ENCODE measurements at regions of chr3 and their contacts with region 1.

Region 1: GRCh38 chr3:143972505-143973255 is 1.1 kb downstream of the DIPK2A start:
- DNase-seq: peak in 8 of 9 donors; percentile 29 to 78 (median 61)
- ATAC-seq: peak; percentile 14
- H3K4me3 ChIP-seq: peak overlapping the region; percentile 61
- H3K4me3 Mint-ChIP-seq: peak overlapping the region; percentile 91 to 100 (median 97)
- H3K27ac ChIP-seq: peak overlapping the region; percentile 84
- H3K27ac Mint-ChIP-seq: peak overlapping the region; percentile 87 to 99 (median 97)
- H3K4me1 ChIP-seq: peaks cover 10 to 14% of the 10 kb centered on the region in 2 donors
- H3K4me1 Mint-ChIP-seq: peaks cover 25 to 46% (median 33%) of the 10 kb centered on the region in 7 donors
- H3K27me3 ChIP-seq: no peaks in the 10 kb centered on the region
- H3K27me3 Mint-ChIP-seq: peaks cover 0 to 22% (median 0%) of the 10 kb centered on the region in 5 donors

Region 2: DNA sequence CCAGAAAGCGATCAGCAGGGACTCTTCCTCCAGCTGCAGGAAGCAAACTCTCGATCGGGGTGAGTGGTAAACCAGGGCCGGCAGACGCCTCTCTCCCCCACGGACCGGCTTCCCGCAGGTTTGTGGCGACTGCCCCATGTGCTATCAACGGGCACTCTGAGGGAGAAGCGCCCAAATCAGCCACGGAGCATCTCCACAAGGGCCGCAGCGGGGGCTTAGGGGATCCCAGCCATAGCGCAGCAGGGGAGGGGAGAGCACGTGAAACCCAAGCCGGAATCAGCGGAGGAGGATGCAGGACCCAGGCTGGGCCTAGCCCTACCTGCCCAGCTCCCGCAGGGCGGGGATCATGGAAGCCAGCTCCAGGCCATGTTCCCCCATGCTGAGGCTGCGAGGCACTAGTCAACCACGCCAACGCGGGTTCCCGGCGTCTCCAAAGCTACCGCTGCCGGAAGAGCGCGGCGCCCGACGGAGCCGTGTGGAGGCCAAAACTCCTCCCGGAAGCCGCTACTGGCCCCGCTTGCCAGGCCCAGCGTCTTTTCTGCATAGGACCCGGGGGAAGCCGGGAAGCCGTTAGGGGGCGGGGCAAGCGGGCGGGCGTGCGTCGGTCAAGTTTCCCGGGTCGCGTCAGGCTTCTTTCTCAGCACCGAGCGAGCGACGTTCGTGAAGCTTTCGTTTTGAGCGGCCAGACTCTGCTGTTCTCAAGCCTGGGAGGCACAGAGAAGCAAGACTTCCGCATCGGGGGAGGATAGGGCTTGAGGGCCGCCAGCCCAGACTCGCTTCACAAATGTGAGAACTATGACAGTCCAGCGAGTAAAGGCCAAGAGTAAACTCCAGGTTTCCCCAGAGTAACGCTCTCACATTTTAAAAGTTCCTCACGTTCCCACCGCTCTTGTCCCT is 1394.1 kb before region 1 on chr3 and contains the start of gene ATR:
- CTCF ChIA-PET with region 1: no interaction called
- POLR2A ChIA-PET with region 1: interaction called, 5 read pairs
- intact Hi-C with region 1: loop called (anchors 1 to 5 kb)
- DNase-seq: peak; percentile 89 to 96 (median 95)
- ATAC-seq: peak; percentile 96
- H3K4me3 ChIP-seq: peak within 1 kb of the TSS; percentile 97
- H3K4me3 Mint-ChIP-seq: peak within 1 kb of the TSS; percentile 93 to 99 (median 97)
- H3K27ac ChIP-seq: peak within 1 kb of the TSS; percentile 94
- H3K27ac Mint-ChIP-seq: peak within 1 kb of the TSS; percentile 96 to 99 (median 98)
- H3K4me1 ChIP-seq: peaks cover 25 to 26% of the 10 kb centered on the region in 2 donors
- H3K4me1 Mint-ChIP-seq: peaks cover 45 to 60% (median 54%) of the 10 kb centered on the region in 7 donors
- H3K27me3 ChIP-seq: no peaks in the 10 kb centered on the region
- H3K27me3 Mint-ChIP-seq: peaks cover 0 to 20% (median 0%) of the 10 kb centered on the region in 5 donors
- total RNA-seq, gene ATR: 31.3 to 48.3 (median 36.2) TPM

Region 3: DNA sequence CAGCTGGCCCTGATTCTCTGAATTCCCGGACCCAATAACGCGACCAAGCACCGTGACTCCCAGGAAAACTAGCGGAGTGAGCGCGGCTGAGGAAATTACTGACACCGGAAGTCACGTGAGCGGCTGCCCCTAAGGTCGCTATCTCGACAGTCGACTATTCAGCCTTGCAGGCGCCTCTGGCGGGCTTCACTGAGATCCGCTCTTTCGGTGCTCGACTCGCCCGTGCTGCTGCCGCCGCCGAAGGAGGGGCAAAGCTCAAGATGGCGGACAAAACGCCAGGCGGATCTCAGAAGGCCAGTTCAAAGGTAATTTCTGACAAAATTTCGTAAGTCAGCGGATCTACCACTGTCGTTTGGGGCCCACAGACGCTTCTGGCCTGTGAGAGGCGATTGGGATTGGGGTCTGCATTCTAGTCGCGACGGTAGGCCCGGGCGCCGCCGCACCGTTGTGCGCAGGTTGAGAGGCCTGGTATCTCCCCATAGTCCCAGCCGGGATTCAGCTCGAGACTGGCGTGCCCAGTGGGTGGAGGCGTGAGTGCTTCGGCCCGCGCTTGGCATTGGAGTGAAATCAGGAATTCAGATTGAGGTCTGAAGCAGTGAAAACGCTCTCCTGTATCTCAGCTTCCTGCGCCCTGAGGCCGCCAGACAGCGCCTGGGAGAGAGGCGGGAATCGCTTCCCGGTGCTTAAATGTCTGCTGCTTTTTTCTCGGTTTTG is 971.2 kb before region 1 on chr3 and contains the start of gene U2SURP:
- CTCF ChIA-PET with region 1: no interaction called
- POLR2A ChIA-PET with region 1: interaction called, 16 read pairs
- intact Hi-C with region 1: loop called (anchors 1 to 2 kb)
- DNase-seq: peak; percentile 77 to 95 (median 88)
- ATAC-seq: peak; percentile 99
- H3K4me3 ChIP-seq: peak within 1 kb of the TSS; percentile 96
- H3K4me3 Mint-ChIP-seq: peak within 1 kb of the TSS; percentile 91 to 100 (median 98)
- H3K27ac ChIP-seq: peak within 1 kb of the TSS; percentile 95
- H3K27ac Mint-ChIP-seq: peak within 1 kb of the TSS; percentile 96 to 100 (median 99)
- H3K4me1 ChIP-seq: peaks cover 13 to 20% of the 10 kb centered on the region in 2 donors
- H3K4me1 Mint-ChIP-seq: peaks cover 34 to 63% (median 53%) of the 10 kb centered on the region in 7 donors
- H3K27me3 ChIP-seq: no peaks in the 10 kb centered on the region
- H3K27me3 Mint-ChIP-seq: peaks cover 0 to 5% (median 2%) of the 10 kb centered on the region in 5 donors
- total RNA-seq, gene U2SURP: 132 to 172 (median 158) TPM

Region 4: DNA sequence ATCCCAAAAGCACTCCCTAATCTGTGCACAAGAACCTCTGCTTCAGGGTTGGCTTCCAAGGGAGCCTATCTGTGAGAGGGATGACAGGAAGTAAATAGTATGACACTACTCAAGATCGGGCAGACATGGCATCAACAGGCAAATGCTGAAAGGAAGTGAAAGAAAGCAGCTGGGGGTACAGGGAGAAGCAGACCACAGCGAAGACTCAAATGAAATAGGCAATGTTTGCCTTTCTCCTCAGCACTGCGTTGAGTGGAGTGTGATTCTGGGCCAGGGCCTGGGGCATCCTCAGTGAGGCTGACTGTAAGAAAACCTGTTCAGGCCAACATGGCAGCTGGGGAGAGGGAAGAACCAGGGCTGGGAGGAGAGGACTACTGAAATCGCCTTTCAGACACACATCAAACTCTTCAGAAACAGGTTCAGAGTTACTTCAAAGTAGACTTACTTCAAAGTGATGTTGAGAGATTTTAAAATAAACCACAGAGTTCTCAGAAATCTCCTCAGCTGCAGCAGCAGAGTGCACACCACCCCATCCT is 221.0 kb before region 1 on chr3:
- CTCF ChIA-PET with region 1: interaction called, 3 read pairs
- POLR2A ChIA-PET with region 1: interaction called, 24 read pairs
- intact Hi-C with region 1: loop called in 1 of 2 experiments (anchors 1 kb)
- DNase-seq: peak; percentile 12 to 83 (median 75)
- ATAC-seq: peak; percentile 80
- H3K4me3 ChIP-seq: peak overlapping the region; percentile 42
- H3K4me3 Mint-ChIP-seq: peak overlapping the region; percentile 67 to 89 (median 78)
- H3K27ac ChIP-seq: peak overlapping the region; percentile 63
- H3K27ac Mint-ChIP-seq: peak overlapping the region; percentile 88 to 100 (median 94)
- H3K4me1 ChIP-seq: peaks cover 16 to 35% of the 10 kb centered on the region in 2 donors
- H3K4me1 Mint-ChIP-seq: peaks cover 20 to 71% (median 68%) of the 10 kb centered on the region in 7 donors
- H3K27me3 ChIP-seq: no peaks in the 10 kb centered on the region
- H3K27me3 Mint-ChIP-seq: no peaks in the 10 kb centered on the region

Region 5: DNA sequence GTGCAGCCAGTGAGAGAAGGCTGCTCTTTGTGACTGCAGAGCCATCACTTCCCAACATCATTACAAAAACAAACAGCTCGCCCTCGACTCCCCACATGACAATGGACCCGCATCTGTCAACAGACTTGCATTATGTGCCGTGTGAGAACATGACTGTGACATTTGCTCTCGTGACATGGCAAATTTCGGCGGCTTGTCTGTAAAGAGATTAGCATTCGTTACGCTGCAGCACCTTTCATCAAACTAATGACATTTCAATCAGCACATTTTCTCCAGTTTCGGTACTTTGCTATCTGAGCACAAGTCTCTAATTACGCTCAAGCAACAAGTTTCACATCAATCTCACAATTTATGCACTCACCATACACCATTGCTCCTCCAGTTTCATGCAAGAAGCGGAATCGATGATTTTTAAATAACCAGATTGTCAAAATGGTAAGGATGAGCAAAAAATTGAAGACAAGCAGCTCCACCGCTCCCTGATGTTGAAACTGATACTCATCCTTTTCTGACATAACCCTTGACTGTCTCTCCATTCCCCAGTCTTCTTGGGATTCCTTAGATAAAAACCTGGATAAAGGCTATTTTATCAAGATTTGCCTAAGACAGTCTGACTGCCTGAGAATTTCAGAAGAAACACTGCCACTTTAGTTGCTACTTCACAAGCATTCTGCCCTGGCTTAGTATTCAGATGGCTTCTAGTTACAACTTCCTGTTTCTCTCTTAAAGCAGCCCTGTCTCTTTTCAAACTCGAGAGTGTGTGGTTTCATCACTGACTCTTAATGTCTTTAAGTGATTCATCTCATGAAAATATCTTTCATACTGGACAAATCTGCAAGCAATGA is 124.7 kb before region 1 on chr3 and contains the start of gene SLC9A9:
- CTCF ChIA-PET with region 1: interaction called, 3 read pairs
- POLR2A ChIA-PET with region 1: interaction called, 17 read pairs
- intact Hi-C with region 1: loop called (anchors 1 kb)
- DNase-seq: peak in 8 of 9 donors; percentile 11 to 50 (median 40)
- ATAC-seq: peak; percentile 93
- H3K4me3 ChIP-seq: peak within 1 kb of the TSS; percentile 71
- H3K4me3 Mint-ChIP-seq: peak within 1 kb of the TSS; percentile 88 to 98 (median 96)
- H3K27ac ChIP-seq: peak within 1 kb of the TSS; percentile 72
- H3K27ac Mint-ChIP-seq: peak within 1 kb of the TSS; percentile 80 to 96 (median 90)
- H3K4me1 ChIP-seq: peaks cover 17 to 21% of the 10 kb centered on the region in 2 donors
- H3K4me1 Mint-ChIP-seq: peaks cover 31 to 62% (median 55%) of the 10 kb centered on the region in 7 donors
- H3K27me3 ChIP-seq: no peaks in the 10 kb centered on the region
- H3K27me3 Mint-ChIP-seq: peaks cover 0 to 4% (median 0%) of the 10 kb centered on the region in 5 donors
- total RNA-seq, gene SLC9A9: 9.3 to 21.9 (median 16.6) TPM

Region 6: DNA sequence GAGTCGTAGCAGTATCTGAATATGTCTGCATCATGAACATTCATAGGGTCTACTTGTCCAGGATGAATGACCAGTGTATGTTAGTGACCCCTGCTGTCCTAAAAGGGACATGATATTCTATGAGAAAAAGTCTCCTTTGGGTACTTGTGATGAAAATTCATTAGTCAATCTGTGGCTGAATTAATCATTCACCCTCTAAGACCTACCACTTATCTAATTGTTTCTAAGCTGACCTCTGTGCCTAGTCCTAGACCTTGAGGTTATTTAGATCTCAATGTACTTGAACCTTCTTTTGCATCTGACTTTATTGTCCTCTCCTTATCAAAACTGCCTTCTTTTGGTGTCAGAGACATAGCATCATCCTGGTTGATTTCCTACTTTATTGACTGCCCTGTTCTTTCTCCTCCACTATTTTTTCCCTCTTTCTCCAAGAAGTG is 798.3 kb after region 1 on chr3:
- CTCF ChIA-PET with region 1: no interaction called
- POLR2A ChIA-PET with region 1: no interaction called
- intact Hi-C with region 1: loop called in 1 of 2 experiments (anchors 10 kb)
- DNase-seq: no peak
- ATAC-seq: no peak
- H3K4me3 ChIP-seq: no peak overlapping the region
- H3K4me3 Mint-ChIP-seq: no peak overlapping the region
- H3K27ac ChIP-seq: no peak overlapping the region
- H3K27ac Mint-ChIP-seq: no peak overlapping the region
- H3K4me1 ChIP-seq: no peaks in the 10 kb centered on the region
- H3K4me1 Mint-ChIP-seq: no peaks in the 10 kb centered on the region
- H3K27me3 ChIP-seq: no peaks in the 10 kb centered on the region
- H3K27me3 Mint-ChIP-seq: no peaks in the 10 kb centered on the region